ENCODE measurements at regions of chr11 and their contacts with region 1.

Region 1: GRCh38 chr11:20609727-20610707 is 10.6 kb downstream of the SLC6A5 start:
- DNase-seq: peak; percentile 68 to 71
- ATAC-seq: peak; percentile 96 to 99
- H3K4me3 ChIP-seq: peak overlapping the region; percentile 26; the same call in 1 of the 3 replicates
- H3K27ac ChIP-seq: no peak overlapping the region
- H3K4me1 ChIP-seq: 0 out of 3 replicates have a peak, but pooled peaks cover 4% of the 10 kb centered on the region
- CTCF ChIP-seq: peak; percentile 83
- EP300 ChIP-seq: no peak
- POLR2A ChIP-seq: no peak
- RAD21 ChIP-seq: peak; percentile 90 to 91

Region 2: GRCh38 chr11:20397281-20397680 is 212.7 kb before region 1 on chr11:
- CTCF ChIA-PET with region 1: interaction called, 55 read pairs
- POLR2A ChIA-PET with region 1: interaction called, 3 read pairs
- DNase-seq: peak; percentile 38 to 69
- ATAC-seq: peak; percentile 96 to 99
- H3K4me3 ChIP-seq: no peak overlapping the region
- H3K27ac ChIP-seq: no peak overlapping the region
- H3K4me1 ChIP-seq: no peaks in the 10 kb centered on the region
- CTCF ChIP-seq: peak; percentile 67
- EP300 ChIP-seq: no peak
- POLR2A ChIP-seq: no peak
- RAD21 ChIP-seq: peak; percentile 41 to 51; a peak in 4 of 5 replicates

Region 3: GRCh38 chr11:20403059-20403458 is 207.0 kb before region 1 on chr11:
- CTCF ChIA-PET with region 1: interaction called, 55 read pairs
- POLR2A ChIA-PET with region 1: no interaction called
- DNase-seq: no peak
- ATAC-seq: no peak
- H3K4me3 ChIP-seq: no peak overlapping the region
- H3K27ac ChIP-seq: no peak overlapping the region
- H3K4me1 ChIP-seq: no peaks in the 10 kb centered on the region
- CTCF ChIP-seq: no peak
- EP300 ChIP-seq: no peak
- POLR2A ChIP-seq: no peak
- RAD21 ChIP-seq: no peak

Region 4: DNA sequence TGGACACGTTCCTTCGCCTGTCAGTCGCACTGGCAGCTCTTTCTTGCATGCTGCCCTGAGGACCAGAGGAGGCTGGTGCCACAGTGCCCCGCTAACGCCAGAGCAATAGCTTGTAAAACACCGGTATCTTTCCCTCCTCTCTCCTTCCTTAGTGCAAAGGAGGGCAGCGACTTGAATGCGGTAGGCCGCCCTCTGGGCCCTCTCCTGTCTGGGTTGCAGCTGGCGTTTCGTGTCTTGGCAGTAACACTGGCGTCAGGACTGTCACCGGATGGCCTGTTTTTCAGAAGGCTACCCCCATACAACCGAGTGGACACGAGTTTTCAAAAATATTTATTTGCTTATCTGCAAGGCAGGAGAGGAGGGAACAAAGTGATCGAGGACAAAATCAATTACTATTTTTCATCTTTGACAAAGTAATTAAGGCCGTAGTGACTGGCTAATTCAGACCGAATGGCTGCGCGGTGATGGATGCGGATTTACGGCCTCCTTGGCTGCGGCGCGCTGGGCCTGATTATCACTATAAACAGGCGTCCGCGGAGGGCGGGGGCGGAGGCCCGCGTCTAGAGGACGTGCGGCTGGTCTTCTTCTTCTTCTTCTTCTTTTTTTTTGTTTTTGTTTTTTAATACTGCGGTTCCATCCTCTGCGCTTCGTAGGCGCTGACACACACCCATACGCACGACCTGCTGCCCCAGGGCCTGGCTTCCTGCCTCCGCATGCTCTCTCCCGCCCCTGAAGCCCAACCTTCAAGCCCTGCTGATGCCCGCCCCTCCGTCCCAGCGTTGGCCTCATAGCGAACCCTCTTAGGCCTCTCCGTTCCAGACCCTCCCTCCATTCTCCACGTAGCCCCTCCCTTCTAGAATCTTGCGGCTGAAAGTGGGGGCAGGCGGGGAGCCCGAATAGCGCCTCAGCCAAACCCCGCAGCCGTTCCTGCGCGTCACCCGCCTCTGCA is 13.5 kb before region 1 on chr11:
- CTCF ChIA-PET with region 1: interaction called, 16 read pairs
- POLR2A ChIA-PET with region 1: no interaction called
- DNase-seq: no peak
- ATAC-seq: no peak
- H3K4me3 ChIP-seq: no peak overlapping the region
- H3K27ac ChIP-seq: no peak overlapping the region
- H3K4me1 ChIP-seq: no peaks in the 10 kb centered on the region
- CTCF ChIP-seq: no peak
- EP300 ChIP-seq: no peak
- POLR2A ChIP-seq: no peak
- RAD21 ChIP-seq: no peak

Region 5: DNA sequence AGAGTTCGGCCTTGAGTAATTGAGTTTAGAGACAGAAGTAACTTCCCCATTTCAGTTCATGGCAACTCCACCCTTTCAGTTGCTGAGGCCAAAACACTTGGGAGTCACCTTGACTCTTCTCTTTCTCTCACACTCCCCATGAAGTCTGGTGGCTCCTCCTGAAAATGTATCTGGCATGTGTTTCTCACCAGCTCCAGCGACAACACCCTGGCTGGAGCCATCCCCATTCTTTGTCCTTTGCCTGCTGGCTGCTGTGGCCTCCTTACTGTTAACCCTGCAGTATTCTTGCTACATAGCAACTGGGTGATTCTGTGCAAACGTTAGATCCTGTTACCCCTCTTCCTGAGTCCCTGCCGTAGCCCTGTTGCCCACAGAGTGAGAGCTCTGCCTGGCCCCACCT is 13.2 kb after region 1 on chr11:
- CTCF ChIA-PET with region 1: interaction called, 36 read pairs
- POLR2A ChIA-PET with region 1: no interaction called
- DNase-seq: no peak
- ATAC-seq: no peak; a peak in 1 of 6 replicates
- H3K4me3 ChIP-seq: no peak overlapping the region
- H3K27ac ChIP-seq: no peak overlapping the region
- H3K4me1 ChIP-seq: no peaks in the 10 kb centered on the region
- CTCF ChIP-seq: no peak
- EP300 ChIP-seq: no peak
- POLR2A ChIP-seq: no peak
- RAD21 ChIP-seq: no peak

Measured in A549 (cell line).